Mucosa of descending colon (tissue), 3 donors: ENCODE measurements at regions of chr7 and their contacts with region 1.

Region 1: GRCh38 chr7:33932832-33933468 is 27.6 kb downstream of the BMPER start:
- DNase-seq: peak; percentile 66 to 84 (median 79)
- ATAC-seq: peak; percentile 94
- H3K4me3 ChIP-seq: no peak overlapping the region
- H3K4me1 ChIP-seq: no peaks in the 10 kb centered on the region
- CTCF ChIP-seq: peak; percentile 84

Region 2: DNA sequence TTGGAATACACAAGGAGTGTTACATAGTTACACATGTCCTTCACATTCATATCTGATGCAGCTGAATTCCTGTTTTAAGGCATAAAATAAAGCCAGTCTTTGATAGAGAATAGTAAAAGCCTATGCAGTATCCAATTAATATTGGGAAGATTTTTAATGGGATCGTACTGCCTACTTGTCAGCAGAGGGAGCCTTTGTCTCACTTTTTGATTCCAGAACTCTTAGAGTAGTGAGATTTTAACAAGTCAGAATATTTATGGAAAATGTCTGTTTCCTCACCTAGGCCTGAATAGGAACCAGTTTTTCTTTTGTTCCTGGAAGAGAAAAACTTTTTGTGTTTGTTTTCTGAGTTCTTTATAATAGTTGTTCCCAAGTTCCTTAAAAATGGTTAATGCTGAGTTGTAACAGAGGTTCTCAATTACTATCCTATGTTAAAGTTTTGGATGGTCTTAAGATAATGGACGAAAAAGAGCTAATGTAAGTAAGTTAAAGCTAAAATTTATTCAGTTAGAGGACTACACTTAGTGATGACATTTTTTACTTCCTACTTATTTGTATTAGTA is 689.5 kb before region 1 on chr7:
- intact Hi-C with region 1: loop called (anchors 5 to 10 kb)
- DNase-seq: no peak
- ATAC-seq: peak; percentile 38
- H3K4me3 ChIP-seq: no peak overlapping the region
- H3K4me1 ChIP-seq: no peaks in the 10 kb centered on the region
- CTCF ChIP-seq: no peak

Region 3: GRCh38 chr7:34198231-34198641 is 265.3 kb after region 1 on chr7:
- intact Hi-C with region 1: no loop called
- DNase-seq: no peak
- ATAC-seq: no peak
- H3K4me3 ChIP-seq: no peak overlapping the region
- H3K4me1 ChIP-seq: no peaks in the 10 kb centered on the region
- CTCF ChIP-seq: no peak